Sigmoid colon (tissue), 7 donors: ENCODE measurements at regions of chr17 and their contacts with region 1.

Region 1: DNA sequence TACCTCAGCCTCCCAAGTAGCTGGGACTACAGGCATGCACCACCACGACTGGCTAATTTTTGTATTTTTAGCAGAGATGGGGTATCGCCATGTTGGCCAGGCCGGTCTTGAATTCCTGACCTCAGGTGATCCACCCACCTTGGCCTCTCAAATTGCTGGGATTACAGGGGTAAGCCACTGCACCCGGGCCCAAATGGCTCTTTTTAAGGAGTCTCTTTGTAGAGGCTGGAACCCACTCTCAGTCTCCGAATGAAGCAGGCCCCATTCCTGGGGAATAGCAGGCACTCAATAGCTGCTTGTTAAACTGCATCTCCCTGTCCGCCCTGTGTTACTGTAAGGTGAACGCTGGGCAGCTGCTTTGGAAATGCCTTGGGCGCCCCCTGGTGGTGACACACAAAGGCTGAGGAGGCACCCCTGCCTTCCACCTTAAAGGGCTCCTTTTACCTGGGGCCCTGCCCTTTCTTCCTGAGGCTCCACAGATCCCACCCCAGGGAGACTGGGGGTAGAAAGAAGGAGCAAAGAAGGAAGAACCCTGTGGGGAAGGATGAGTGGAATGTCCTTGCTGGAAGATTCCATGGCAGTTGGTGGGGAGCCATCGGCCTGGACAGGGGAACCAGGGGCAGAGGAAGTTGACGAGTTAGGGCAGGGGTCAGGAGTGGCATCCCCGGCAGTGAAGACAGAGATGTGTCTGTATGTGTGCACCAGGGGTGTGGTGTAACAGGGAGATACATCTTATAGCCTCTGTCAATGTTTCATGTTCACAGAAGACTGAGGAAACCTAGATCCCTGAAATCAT is 6.1 kb upstream of the SP2 start:
- DNase-seq: peak; percentile 92
- H3K4me3 ChIP-seq: no peak overlapping the region
- H3K27ac ChIP-seq: no peak overlapping the region
- H3K4me1 ChIP-seq: peaks cover 0 to 11% (median 8%) of the 10 kb centered on the region in 4 donors
- H3K27me3 ChIP-seq: no peaks in the 10 kb centered on the region
- CTCF ChIP-seq: peak; percentile 87 to 98 (median 96)
- EP300 ChIP-seq: no peak
- POLR2A ChIP-seq: no peak

Region 2: GRCh38 chr17:47840740-47841603 is 49.0 kb before region 1 on chr17 and contains the start of gene SCRN2:
- intact Hi-C with region 1: loop called (anchors 1 kb)
- DNase-seq: peak; percentile 94
- H3K4me3 ChIP-seq: peak within 1 kb of the TSS; percentile 71 to 91 (median 80)
- H3K27ac ChIP-seq: peak within 1 kb of the TSS; percentile 63 to 80 (median 76)
- H3K4me1 ChIP-seq: peaks cover 0 to 22% (median 18%) of the 10 kb centered on the region in 4 donors
- H3K27me3 ChIP-seq: peaks cover 5 to 11% (median 9%) of the 10 kb centered on the region in 3 donors
- CTCF ChIP-seq: peak; percentile 96 to 99 (median 98)
- EP300 ChIP-seq: no peak
- POLR2A ChIP-seq: no peak
- total RNA-seq, gene SCRN2: 22.5 to 28.8 (median 23.4) TPM

Region 3: DNA sequence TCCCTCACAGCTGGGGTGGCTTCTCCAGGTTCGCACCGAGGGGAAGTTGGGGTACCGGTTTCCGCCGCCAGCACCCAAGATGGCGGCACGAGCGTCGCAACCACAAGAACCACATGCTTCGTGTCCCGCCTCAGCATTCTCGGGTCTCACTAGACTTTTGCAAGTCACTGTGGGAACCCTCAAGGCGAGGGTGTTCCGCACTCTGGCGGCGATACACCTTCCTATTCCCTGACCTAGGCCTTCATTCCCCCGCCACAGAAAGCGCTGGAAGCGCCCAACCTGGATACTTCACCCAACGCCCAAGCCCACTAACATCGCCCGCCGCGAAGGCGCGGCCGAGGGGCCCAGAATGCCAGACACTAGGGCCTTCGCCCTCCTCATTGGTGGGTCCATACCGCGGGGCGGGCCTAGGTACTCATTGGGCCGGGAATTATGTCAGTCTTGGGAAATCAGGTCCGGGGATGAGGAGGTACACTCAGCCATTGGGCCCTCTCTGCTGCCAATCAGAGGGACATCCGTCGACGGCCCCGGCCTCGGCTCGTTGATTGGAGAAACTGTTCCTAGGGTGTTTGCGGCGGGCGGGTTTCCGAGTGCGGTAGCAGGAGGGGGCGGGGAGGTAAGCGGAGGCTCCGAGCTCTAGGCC is 157.9 kb after region 1 on chr17 and contains the start of gene NFE2L1:
- intact Hi-C with region 1: no loop called
- DNase-seq: peak; percentile 100
- H3K4me3 ChIP-seq: peak within 1 kb of the TSS; percentile 77 to 88 (median 83)
- H3K27ac ChIP-seq: peak within 1 kb of the TSS; percentile 96 to 99 (median 98)
- H3K4me1 ChIP-seq: peaks cover 0 to 54% (median 51%) of the 10 kb centered on the region in 4 donors
- H3K27me3 ChIP-seq: no peaks in the 10 kb centered on the region
- CTCF ChIP-seq: no peak
- EP300 ChIP-seq: no peak
- POLR2A ChIP-seq: peak; percentile 51 to 79
- total RNA-seq, gene NFE2L1: 126 to 174 (median 141) TPM

Region 4: DNA sequence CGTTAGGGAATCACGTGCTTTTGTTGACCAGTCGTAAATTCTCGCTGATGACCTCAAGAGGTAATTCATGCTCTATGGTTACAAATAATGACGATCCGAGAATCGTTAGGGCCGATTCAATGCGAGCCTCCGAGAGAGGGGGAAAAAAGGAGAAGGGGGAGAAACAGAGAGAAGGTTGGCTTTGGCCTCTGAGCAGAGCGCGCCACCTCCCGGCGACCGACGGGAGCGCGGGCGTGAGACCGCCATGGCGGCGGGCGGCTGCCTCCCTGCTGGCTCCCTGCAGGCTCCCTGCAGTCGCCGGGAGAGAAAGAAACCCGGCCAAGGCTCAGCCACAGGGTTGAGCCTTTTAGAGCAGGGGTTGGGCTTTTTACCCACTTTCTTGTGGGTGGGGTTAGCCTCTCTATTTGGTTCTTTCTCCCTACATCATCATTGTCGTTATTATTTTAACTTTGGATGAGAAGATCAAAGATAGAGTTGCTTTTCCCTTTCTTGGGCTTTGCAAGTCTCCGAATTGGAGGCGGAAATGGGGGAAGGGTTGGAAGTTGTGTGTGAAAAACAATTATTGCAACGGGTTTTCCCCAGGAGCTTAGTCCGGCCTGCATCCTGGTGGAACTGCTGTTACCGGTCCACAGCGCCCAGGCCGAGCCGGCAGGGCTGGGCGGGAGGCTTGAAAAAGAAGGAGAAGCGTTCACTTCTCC is 704.1 kb after region 1 on chr17:
- intact Hi-C with region 1: no loop called
- DNase-seq: peak; percentile 92
- H3K4me3 ChIP-seq: peak overlapping the region; percentile 36 to 70 (median 56)
- H3K27ac ChIP-seq: peak overlapping the region in 3 of 4 donors; percentile 95 to 99 (median 97)
- H3K4me1 ChIP-seq: peaks cover 0 to 61% (median 52%) of the 10 kb centered on the region in 4 donors
- H3K27me3 ChIP-seq: peaks cover 0 to 7% (median 0%) of the 10 kb centered on the region in 3 donors
- CTCF ChIP-seq: peak; percentile 90 to 94 (median 92)
- EP300 ChIP-seq: no peak
- POLR2A ChIP-seq: no peak